ENCODE measurements at regions of chr2 and their contacts with region 1.

Region 1: DNA sequence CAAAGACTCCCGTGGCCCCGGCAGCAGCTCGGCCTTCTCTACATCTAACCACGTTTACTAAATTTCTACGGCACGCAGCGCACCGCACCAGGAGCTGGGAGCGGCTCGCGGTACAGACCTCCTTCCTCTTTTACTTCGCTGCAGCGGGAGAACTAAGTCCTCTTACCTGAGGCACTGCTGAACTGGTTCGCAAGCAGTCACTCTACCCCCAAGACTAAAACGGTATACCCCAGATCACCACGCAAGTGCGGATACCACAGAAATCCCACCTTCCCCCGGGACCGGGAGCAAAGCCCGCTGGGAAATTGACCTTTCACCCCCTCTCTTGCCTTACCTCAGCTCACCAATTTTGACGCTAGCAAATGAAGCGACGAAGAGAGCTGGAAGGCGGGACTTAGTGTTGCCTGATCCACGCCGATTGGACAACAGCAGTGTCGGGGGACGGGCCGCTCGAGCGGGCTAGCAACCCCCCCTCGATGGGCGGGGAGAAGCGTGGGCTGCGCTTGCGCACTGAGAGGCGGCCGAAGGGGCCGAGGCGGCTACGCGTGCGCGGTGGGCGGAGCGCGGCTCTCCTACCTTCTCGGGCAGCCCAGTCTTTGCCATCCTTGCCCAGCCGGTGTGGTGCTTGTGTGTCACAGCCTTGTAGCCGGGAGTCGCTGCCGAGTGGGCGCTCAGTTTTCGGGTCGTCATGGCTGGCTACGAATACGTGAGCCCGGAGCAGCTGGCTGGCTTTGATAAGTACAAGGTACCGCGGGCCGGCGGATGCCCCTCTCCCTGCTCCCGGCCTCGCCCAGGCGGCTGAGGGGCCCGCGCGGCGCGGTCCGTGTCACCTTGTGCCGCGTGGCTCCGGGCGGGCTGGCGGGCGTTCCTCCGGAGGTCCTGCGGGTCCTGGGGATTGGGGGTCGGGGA is at the start of gene SELENOI:
- DNase-seq: peak; percentile 100
- H3K4me3 Mint-ChIP-seq: peak within 1 kb of the TSS; percentile 96
- H3K27ac Mint-ChIP-seq: peak within 1 kb of the TSS; percentile 96
- H3K4me1 Mint-ChIP-seq: peaks cover 21% of the 10 kb centered on the region
- H3K27me3 Mint-ChIP-seq: no peaks in the 10 kb centered on the region
- total RNA-seq, gene SELENOI: 63.7 and 68.8 TPM in 2 replicates

Region 2: DNA sequence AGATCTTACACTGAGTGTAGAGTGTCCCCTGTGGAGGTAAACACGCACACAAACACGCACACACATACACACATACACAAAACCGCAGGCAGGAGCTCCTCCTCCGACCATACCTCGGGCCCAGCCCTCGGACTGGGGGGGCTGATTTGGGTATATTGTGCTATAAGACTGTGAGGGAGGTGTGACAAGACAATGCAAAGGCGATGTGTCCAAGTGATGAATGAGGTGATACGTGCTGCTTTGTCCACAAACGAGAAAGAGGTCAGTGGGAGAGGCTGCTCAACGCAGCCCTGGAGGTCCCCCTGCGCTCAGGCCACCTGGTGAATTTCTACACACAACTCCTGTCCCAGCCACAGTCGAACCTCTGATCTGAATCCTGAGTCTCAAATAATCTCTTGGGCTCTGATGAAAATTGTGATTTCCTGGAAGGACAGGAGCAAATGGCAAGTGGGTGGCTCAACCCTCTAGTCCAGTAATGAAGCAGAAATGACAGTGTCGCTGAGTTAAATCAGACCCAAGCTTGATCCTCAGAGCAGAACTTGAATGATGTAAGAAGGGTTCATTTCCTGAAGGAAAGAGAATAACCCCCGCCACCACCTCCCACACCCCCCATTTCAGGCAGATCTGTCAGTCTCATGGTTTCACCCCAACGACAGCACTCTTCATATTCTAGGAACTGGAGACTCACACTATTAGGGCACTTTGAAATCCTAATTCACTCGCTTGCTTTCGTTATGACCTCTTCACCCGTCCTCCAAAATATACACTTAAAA is 418.6 kb before region 1 on chr2:
- intact Hi-C with region 1: no loop called
- DNase-seq: no peak
- H3K4me3 Mint-ChIP-seq: no peak overlapping the region
- H3K27ac Mint-ChIP-seq: no peak overlapping the region
- H3K4me1 Mint-ChIP-seq: no peaks in the 10 kb centered on the region
- H3K27me3 Mint-ChIP-seq: peaks cover 7% of the 10 kb centered on the region

Region 3: GRCh38 chr2:26018176-26018716 is 327.6 kb before region 1 on chr2:
- intact Hi-C with region 1: no loop called
- DNase-seq: peak; percentile 66
- H3K4me3 Mint-ChIP-seq: no peak overlapping the region
- H3K27ac Mint-ChIP-seq: no peak overlapping the region
- H3K4me1 Mint-ChIP-seq: peaks cover 3% of the 10 kb centered on the region
- H3K27me3 Mint-ChIP-seq: peaks cover 2% of the 10 kb centered on the region

Region 4: GRCh38 chr2:26396734-26397298 is 51.0 kb after region 1 on chr2:
- intact Hi-C with region 1: loop called (anchors 10 kb)
- DNase-seq: peak; percentile 63
- H3K4me3 Mint-ChIP-seq: no peak overlapping the region
- H3K27ac Mint-ChIP-seq: peak overlapping the region; percentile 22
- H3K4me1 Mint-ChIP-seq: peaks cover 19% of the 10 kb centered on the region
- H3K27me3 Mint-ChIP-seq: peaks cover 3% of the 10 kb centered on the region

Region 5: DNA sequence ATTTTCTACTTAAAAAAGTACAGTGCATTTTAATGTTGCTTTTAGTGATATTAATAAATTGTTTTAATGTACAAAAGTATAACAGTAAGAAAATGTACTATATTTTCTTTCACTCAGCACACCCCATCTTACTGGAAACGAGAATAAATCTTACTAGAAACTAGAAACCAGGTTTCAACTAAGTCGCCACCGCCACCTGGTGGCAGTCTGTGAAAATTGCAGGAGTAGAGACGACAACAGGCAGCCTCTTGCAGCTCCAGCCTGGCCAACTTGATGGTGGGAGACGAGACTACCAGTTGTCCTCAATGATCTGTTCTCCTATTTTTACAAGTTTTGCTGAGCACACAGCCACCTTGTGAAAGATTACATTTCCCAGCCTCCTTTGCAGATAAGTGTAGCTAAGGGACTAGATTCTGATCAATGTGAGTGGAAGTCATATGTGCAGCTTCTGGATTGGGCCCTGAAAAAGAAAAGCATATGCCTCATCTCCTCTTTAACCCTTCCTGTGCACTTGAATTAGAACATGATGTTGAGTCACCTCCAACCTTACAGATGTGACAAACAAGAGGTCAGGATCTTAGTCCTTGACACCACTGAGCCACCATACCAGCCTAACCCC is 123.4 kb after region 1 on chr2:
- intact Hi-C with region 1: loop called (anchors 5 kb)
- DNase-seq: peak; percentile 88
- H3K4me3 Mint-ChIP-seq: no peak overlapping the region
- H3K27ac Mint-ChIP-seq: no peak overlapping the region
- H3K4me1 Mint-ChIP-seq: no peaks in the 10 kb centered on the region
- H3K27me3 Mint-ChIP-seq: no peaks in the 10 kb centered on the region